Naive thymus-derived CD8-positive, alpha-beta T cell (primary cell): ENCODE measurements at regions of chr12 and their contacts with region 1.

Region 1: GRCh38 chr12:49130151-49131050 is 794 bp downstream of the TUBA1B start:
- DNase-seq: peak; percentile 89 to 97 (median 92)
- ATAC-seq: peak; percentile 67 to 75
- H3K4me3 Mint-ChIP-seq: peak overlapping the region; percentile 95 to 99 (median 97)
- H3K27ac Mint-ChIP-seq: peak overlapping the region; percentile 96 to 99 (median 98)
- H3K4me1 Mint-ChIP-seq: peaks cover 14 to 62% (median 49%) of the 10 kb centered on the region in 4 donors
- H3K27me3 Mint-ChIP-seq: no peaks in the 10 kb centered on the region

Region 2: DNA sequence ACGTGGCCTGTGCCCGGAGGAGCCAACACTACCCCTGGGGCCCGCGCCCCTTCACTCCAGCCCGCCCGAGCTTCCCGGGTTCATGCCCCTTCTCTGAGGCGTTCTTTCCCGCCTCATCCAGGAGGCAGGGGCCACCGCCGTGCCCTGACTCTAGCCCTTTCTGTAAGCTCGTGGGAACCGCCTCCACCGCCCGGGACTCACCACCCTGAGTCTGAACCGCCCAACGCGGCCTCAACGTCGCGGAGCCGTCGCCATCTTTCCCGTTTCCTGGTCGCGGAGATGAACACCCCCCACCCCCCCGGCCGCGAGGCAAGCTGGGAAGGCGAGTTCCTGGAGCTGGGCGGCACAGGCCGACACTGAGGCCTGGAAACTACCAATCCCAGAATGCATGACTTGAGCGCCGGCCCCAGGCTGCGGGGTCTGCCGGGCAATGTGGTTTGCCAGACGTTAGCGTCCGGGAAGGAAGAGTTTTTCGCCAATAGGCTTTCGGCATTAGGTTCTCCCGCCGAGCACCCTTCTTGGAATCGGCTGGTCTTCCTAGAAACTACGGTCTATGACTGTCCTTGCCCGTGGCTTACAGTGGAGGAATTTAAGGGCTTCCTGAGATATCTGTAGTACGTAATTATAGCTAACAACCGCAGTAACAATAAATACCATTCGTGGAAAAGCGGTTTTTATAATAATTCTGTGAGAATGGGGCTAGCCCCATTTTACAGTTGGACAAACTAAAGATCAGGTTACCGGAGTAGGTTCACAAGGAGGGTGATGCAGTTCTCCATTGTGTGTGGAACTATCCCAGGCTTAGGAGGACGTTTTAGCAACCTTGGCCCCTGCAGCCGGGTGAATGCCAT is 278.3 kb before region 1 on chr12 and contains the start of gene DDX23:
- POLR2A ChIA-PET with region 1: interaction called, 12 read pairs
- DNase-seq: peak; percentile 81 to 95 (median 89)
- ATAC-seq: peak; percentile 93
- H3K4me3 Mint-ChIP-seq: peak within 1 kb of the TSS; percentile 89 to 99 (median 96)
- H3K27ac Mint-ChIP-seq: peak within 1 kb of the TSS; percentile 90 to 99 (median 96)
- H3K4me1 Mint-ChIP-seq: peaks cover 25 to 44% (median 39%) of the 10 kb centered on the region in 4 donors
- H3K27me3 Mint-ChIP-seq: no peaks in the 10 kb centered on the region
- polyA plus RNA-seq, gene DDX23: 27.6 to 52.2 (median 33.8) TPM

Region 3: GRCh38 chr12:49069507-49070346 is 60.7 kb before region 1 on chr12 and contains the start of gene RHEBL1:
- POLR2A ChIA-PET with region 1: interaction called, 15 read pairs
- DNase-seq: peak; percentile 93 to 99 (median 98)
- ATAC-seq: peak; percentile 98 to 99
- H3K4me3 Mint-ChIP-seq: peak within 1 kb of the TSS; percentile 91 to 99 (median 96)
- H3K27ac Mint-ChIP-seq: peak within 1 kb of the TSS; percentile 66 to 97 (median 92)
- H3K4me1 Mint-ChIP-seq: peaks cover 10 to 20% (median 18%) of the 10 kb centered on the region in 4 donors
- H3K27me3 Mint-ChIP-seq: no peaks in the 10 kb centered on the region
- polyA plus RNA-seq, gene RHEBL1: 3.0 to 3.6 (median 3.4) TPM

Region 4: GRCh38 chr12:49098035-49098451 is 32.4 kb before region 1 on chr12:
- POLR2A ChIA-PET with region 1: interaction called, 27 read pairs
- DNase-seq: peak; percentile 43 to 80 (median 62)
- ATAC-seq: peak; percentile 55 to 60
- H3K4me3 Mint-ChIP-seq: no peak overlapping the region
- H3K27ac Mint-ChIP-seq: peak overlapping the region in 1 of 10 donors; percentile 32
- H3K4me1 Mint-ChIP-seq: peaks cover 14 to 23% (median 18%) of the 10 kb centered on the region in 4 donors
- H3K27me3 Mint-ChIP-seq: peaks cover 9 to 27% (median 18%) of the 10 kb centered on the region in 5 donors

Region 5: GRCh38 chr12:49110464-49111155 is 19.8 kb before region 1 on chr12 and contains the start of gene LMBR1L:
- POLR2A ChIA-PET with region 1: interaction called, 152 read pairs
- DNase-seq: peak; percentile 85 to 99 (median 96)
- ATAC-seq: peak; percentile 93 to 94
- H3K4me3 Mint-ChIP-seq: peak within 1 kb of the TSS; percentile 89 to 99 (median 98)
- H3K27ac Mint-ChIP-seq: peak within 1 kb of the TSS; percentile 92 to 99 (median 98)
- H3K4me1 Mint-ChIP-seq: peaks cover 26 to 48% (median 44%) of the 10 kb centered on the region in 4 donors
- H3K27me3 Mint-ChIP-seq: no peaks in the 10 kb centered on the region
- polyA plus RNA-seq, gene LMBR1L: 34.0 to 45.8 (median 34.6) TPM

Region 6: GRCh38 chr12:49161092-49161795 is 30.8 kb after region 1 on chr12:
- POLR2A ChIA-PET with region 1: no interaction called
- DNase-seq: no peak
- ATAC-seq: no peak
- H3K4me3 Mint-ChIP-seq: no peak overlapping the region
- H3K27ac Mint-ChIP-seq: no peak overlapping the region
- H3K4me1 Mint-ChIP-seq: peaks cover 0 to 21% (median 0%) of the 10 kb centered on the region in 4 donors
- H3K27me3 Mint-ChIP-seq: no peaks in the 10 kb centered on the region

Region 7: GRCh38 chr12:49232940-49233841 is 102.8 kb after region 1 on chr12:
- POLR2A ChIA-PET with region 1: interaction called, 30 read pairs
- DNase-seq: no peak
- ATAC-seq: no peak
- H3K4me3 Mint-ChIP-seq: peak overlapping the region in 9 of 10 donors; percentile 42 to 92 (median 67)
- H3K27ac Mint-ChIP-seq: peak overlapping the region in 9 of 10 donors; percentile 12 to 84 (median 61)
- H3K4me1 Mint-ChIP-seq: peaks cover 0 to 12% (median 4%) of the 10 kb centered on the region in 4 donors
- H3K27me3 Mint-ChIP-seq: no peaks in the 10 kb centered on the region

Region 8: GRCh38 chr12:49274396-49275286 is 144.2 kb after region 1 on chr12:
- POLR2A ChIA-PET with region 1: no interaction called
- DNase-seq: no peak
- ATAC-seq: no peak
- H3K4me3 Mint-ChIP-seq: no peak overlapping the region
- H3K27ac Mint-ChIP-seq: no peak overlapping the region
- H3K4me1 Mint-ChIP-seq: peaks cover 0 to 3% (median 0%) of the 10 kb centered on the region in 4 donors
- H3K27me3 Mint-ChIP-seq: peaks cover 0 to 8% (median 0%) of the 10 kb centered on the region in 5 donors